ENCODE measurements at regions of chr20 and their contacts with region 1.

Region 1: DNA sequence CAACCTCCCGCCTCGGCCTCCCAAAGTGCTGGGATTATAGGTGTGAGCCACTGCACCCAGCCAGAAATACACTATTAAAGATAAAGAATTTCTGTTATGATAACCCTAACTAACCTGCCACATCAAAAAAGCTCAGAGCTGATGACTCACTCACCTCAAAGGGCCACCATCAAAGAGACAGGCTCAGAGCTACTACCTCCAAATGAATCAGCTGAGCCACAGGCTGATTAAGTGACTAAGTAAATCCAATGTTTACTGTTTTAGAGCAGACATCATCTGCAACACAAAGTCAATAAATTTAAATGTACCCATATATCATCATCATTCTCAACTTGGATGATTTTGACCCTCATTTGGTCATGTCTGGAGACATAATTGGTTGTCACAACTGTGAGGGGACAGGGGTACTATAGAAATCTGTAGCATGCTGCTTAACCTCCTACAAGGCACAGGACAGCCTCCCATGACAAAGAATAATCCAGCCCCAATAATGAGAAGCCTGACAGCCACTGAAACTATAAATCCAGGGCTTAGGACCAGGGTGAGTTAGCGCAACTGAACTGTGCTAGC is 106.5 kb downstream of the ATP9A start:
- DNase-seq: peak; percentile 80
- H3K4me3 Mint-ChIP-seq: no peak overlapping the region
- H3K27ac Mint-ChIP-seq: peak overlapping the region; percentile 39
- H3K4me1 Mint-ChIP-seq: peaks cover 21% of the 10 kb centered on the region
- H3K27me3 Mint-ChIP-seq: peaks cover 8% of the 10 kb centered on the region

Region 2: DNA sequence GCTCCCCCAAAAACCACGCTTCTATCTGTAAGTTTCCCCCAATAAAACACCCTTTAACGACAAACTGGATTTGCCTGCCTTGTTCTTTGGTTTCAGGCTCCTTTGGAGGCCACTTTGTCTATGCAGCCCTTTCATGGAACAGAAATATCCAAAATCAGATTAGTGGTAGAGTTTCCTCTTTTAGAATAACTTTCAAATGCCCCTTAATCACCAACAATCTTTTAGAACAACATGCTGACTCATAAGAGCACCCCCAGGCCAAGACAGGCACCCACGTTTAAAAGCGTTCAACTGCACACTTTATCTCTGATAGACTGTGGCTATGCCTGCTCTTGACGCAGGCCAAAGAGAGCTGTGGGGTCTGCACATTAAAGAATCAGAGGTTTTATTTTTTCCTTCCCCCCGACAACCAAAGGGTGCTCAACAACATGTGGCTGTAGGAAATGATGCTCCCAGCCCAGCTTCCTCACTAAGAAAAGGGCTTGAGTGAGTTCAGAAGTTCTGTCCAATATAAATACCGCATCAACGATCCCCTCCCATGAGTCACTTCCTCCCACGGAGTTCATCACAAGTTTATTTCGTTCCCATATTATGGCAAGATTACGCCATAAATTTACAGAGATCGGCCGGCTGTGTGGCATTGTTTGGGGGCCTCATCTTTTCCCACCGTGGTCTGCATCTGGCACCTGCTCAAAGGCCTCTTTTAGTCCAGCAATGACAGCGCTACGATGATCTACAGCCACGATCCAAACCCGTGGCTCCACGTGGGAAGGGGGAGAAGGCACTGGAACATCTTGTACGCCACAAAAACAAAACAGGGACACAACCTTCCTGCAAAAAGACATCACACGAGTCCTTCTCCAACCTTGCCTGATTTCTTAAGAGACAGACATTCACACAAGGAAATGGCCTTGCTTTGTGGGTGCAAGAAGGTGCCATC is 30.4 kb before region 1 on chr20:
- intact Hi-C with region 1: loop called (anchors 1 kb)
- DNase-seq: peak; percentile 70
- H3K4me3 Mint-ChIP-seq: peak overlapping the region; percentile 50
- H3K27ac Mint-ChIP-seq: peak overlapping the region; percentile 90
- H3K4me1 Mint-ChIP-seq: peaks cover 37% of the 10 kb centered on the region
- H3K27me3 Mint-ChIP-seq: peaks cover 13% of the 10 kb centered on the region

Region 3: GRCh38 chr20:52047811-52048764 is 386.4 kb after region 1 on chr20:
- intact Hi-C with region 1: loop called (anchors 1 kb)
- DNase-seq: peak; percentile 81
- H3K4me3 Mint-ChIP-seq: peak overlapping the region; percentile 63
- H3K27ac Mint-ChIP-seq: peak overlapping the region; percentile 85
- H3K4me1 Mint-ChIP-seq: peaks cover 30% of the 10 kb centered on the region
- H3K27me3 Mint-ChIP-seq: peaks cover 4% of the 10 kb centered on the region